ENCODE measurements at regions of chr15 and their contacts with region 1.

Region 1: GRCh38 chr15:31488426-31489204 is 162.0 kb downstream of the KLF13 start:
- DNase-seq: peak; percentile 85
- ATAC-seq: peak; percentile 69
- H3K4me3 ChIP-seq: no peak overlapping the region
- H3K4me3 Mint-ChIP-seq: no peak overlapping the region
- H3K27ac ChIP-seq: no peak overlapping the region
- H3K27ac Mint-ChIP-seq: peak overlapping the region; percentile 15
- H3K4me1 ChIP-seq: peaks cover 11 to 25% of the 10 kb centered on the region in 2 donors
- H3K4me1 Mint-ChIP-seq: peaks cover 23% of the 10 kb centered on the region
- H3K27me3 ChIP-seq: peaks cover 0 to 14% (median 5%) of the 10 kb centered on the region in 4 experiments
- H3K27me3 Mint-ChIP-seq: peaks cover 9% of the 10 kb centered on the region
- CTCF ChIP-seq: peak; percentile 86

Region 2: GRCh38 chr15:31128919-31129768 is 359.5 kb before region 1 on chr15:
- CTCF ChIA-PET with region 1: interaction called, 23 read pairs
- POLR2A ChIA-PET with region 1: no interaction called
- intact Hi-C with region 1: no loop called
- DNase-seq: peak; percentile 85
- ATAC-seq: peak; percentile 89
- H3K4me3 ChIP-seq: peak overlapping the region in 1 of 5 experiments; percentile 15
- H3K4me3 Mint-ChIP-seq: peak overlapping the region; percentile 0
- H3K27ac ChIP-seq: no peak overlapping the region
- H3K27ac Mint-ChIP-seq: peak overlapping the region; percentile 4
- H3K4me1 ChIP-seq: peaks cover 11 to 13% of the 10 kb centered on the region in 2 donors
- H3K4me1 Mint-ChIP-seq: peaks cover 13% of the 10 kb centered on the region
- H3K27me3 ChIP-seq: no peaks in the 10 kb centered on the region
- H3K27me3 Mint-ChIP-seq: no peaks in the 10 kb centered on the region
- CTCF ChIP-seq: peak; percentile 94

Region 3: GRCh38 chr15:31215490-31216214 is 273.0 kb before region 1 on chr15:
- CTCF ChIA-PET with region 1: interaction called, 124 read pairs
- POLR2A ChIA-PET with region 1: interaction called, 14 read pairs
- intact Hi-C with region 1: loop called (anchors 1 kb)
- DNase-seq: peak; percentile 90
- ATAC-seq: peak; percentile 82
- H3K4me3 ChIP-seq: peak overlapping the region in 4 of 5 experiments; percentile 35 to 72 (median 66)
- H3K4me3 Mint-ChIP-seq: peak overlapping the region; percentile 87
- H3K27ac ChIP-seq: peak overlapping the region; percentile 66 to 79
- H3K27ac Mint-ChIP-seq: peak overlapping the region; percentile 87
- H3K4me1 ChIP-seq: peaks cover 14 to 25% of the 10 kb centered on the region in 2 donors
- H3K4me1 Mint-ChIP-seq: peaks cover 23% of the 10 kb centered on the region
- H3K27me3 ChIP-seq: no peaks in the 10 kb centered on the region
- H3K27me3 Mint-ChIP-seq: no peaks in the 10 kb centered on the region
- CTCF ChIP-seq: peak; percentile 96

Region 4: GRCh38 chr15:31326156-31326732 is 162.4 kb before region 1 on chr15:
- CTCF ChIA-PET with region 1: interaction called, 47 read pairs
- POLR2A ChIA-PET with region 1: interaction called, 9 read pairs
- intact Hi-C with region 1: loop called (anchors 1 kb)
- DNase-seq: peak; percentile 100
- ATAC-seq: peak; percentile 70
- H3K4me3 ChIP-seq: peak overlapping the region; percentile 11 to 89 (median 80)
- H3K4me3 Mint-ChIP-seq: peak overlapping the region; percentile 95
- H3K27ac ChIP-seq: peak overlapping the region; percentile 79 to 97
- H3K27ac Mint-ChIP-seq: peak overlapping the region; percentile 99
- H3K4me1 ChIP-seq: peaks cover 49 to 59% of the 10 kb centered on the region in 2 donors
- H3K4me1 Mint-ChIP-seq: peaks cover 62% of the 10 kb centered on the region
- H3K27me3 ChIP-seq: no peaks in the 10 kb centered on the region
- H3K27me3 Mint-ChIP-seq: no peaks in the 10 kb centered on the region
- CTCF ChIP-seq: no peak

Region 5: DNA sequence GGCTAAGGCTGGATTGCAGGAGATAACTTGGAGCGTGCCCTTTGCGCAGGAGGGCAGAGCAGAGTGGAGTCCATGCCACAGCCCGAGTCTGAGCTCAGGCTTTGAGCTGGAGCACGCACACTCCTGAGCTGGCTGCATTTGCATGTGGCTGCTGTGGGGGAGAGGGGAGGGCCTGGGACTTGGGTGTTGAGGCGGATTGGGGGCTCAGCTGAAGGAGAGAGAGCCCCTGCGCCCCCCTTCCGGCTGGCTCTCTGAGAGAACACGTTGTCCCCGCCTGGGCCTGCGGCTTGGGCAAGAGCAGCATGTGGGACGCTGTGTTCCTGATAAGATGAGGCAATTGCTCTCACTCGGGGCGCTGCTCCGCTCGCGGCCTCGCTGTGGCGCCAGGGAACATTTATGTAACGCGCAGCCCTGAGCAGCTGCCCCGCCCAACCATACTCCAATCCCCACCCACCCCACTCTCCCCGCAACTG is 122.9 kb before region 1 on chr15:
- CTCF ChIA-PET with region 1: interaction called, 94 read pairs
- POLR2A ChIA-PET with region 1: interaction called, 3 read pairs
- intact Hi-C with region 1: loop called (anchors 1 kb)
- DNase-seq: peak; percentile 79
- ATAC-seq: peak; percentile 31
- H3K4me3 ChIP-seq: peak overlapping the region in 4 of 5 experiments; percentile 5 to 33 (median 15)
- H3K4me3 Mint-ChIP-seq: peak overlapping the region; percentile 80
- H3K27ac ChIP-seq: no peak overlapping the region
- H3K27ac Mint-ChIP-seq: peak overlapping the region; percentile 93
- H3K4me1 ChIP-seq: peaks cover 85 to 87% of the 10 kb centered on the region in 2 donors
- H3K4me1 Mint-ChIP-seq: peaks cover 95% of the 10 kb centered on the region
- H3K27me3 ChIP-seq: no peaks in the 10 kb centered on the region
- H3K27me3 Mint-ChIP-seq: no peaks in the 10 kb centered on the region
- CTCF ChIP-seq: peak; percentile 59

Region 6: DNA sequence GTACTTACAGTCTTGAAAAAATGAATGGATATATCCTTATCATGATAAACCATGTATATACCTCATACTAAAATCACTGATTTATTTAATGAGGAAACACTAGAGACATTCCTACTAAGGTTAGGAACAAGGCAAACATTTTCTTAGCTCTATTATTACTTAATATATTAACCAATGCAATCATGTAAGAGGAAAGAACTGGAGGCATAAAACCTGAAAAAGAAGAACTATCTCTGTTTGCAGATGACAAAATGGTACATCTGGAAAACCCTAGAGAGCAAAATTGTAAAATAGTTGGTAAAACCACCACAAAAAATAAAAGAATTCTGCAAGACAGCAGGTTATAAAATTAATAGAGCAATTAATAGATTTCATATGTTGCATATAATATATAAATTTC is 80.8 kb before region 1 on chr15:
- CTCF ChIA-PET with region 1: interaction called, 10 read pairs
- POLR2A ChIA-PET with region 1: no interaction called
- intact Hi-C with region 1: no loop called
- DNase-seq: no peak
- ATAC-seq: no peak
- H3K4me3 ChIP-seq: no peak overlapping the region
- H3K4me3 Mint-ChIP-seq: no peak overlapping the region
- H3K27ac ChIP-seq: no peak overlapping the region
- H3K27ac Mint-ChIP-seq: no peak overlapping the region
- H3K4me1 ChIP-seq: peaks cover 20 to 21% of the 10 kb centered on the region in 2 donors
- H3K4me1 Mint-ChIP-seq: peaks cover 19% of the 10 kb centered on the region
- H3K27me3 ChIP-seq: no peaks in the 10 kb centered on the region
- H3K27me3 Mint-ChIP-seq: peaks cover 5% of the 10 kb centered on the region
- CTCF ChIP-seq: no peak

Region 7: GRCh38 chr15:31458591-31459399 is 29.8 kb before region 1 on chr15:
- CTCF ChIA-PET with region 1: interaction called, 30 read pairs
- POLR2A ChIA-PET with region 1: interaction called, 4 read pairs
- intact Hi-C with region 1: no loop called
- DNase-seq: peak; percentile 80
- ATAC-seq: peak; percentile 96
- H3K4me3 ChIP-seq: peak overlapping the region in 3 of 5 experiments; percentile 12 to 37 (median 34)
- H3K4me3 Mint-ChIP-seq: peak overlapping the region; percentile 85
- H3K27ac ChIP-seq: peak overlapping the region; percentile 34 to 47
- H3K27ac Mint-ChIP-seq: peak overlapping the region; percentile 87
- H3K4me1 ChIP-seq: peaks cover 40 to 48% of the 10 kb centered on the region in 2 donors
- H3K4me1 Mint-ChIP-seq: peaks cover 44% of the 10 kb centered on the region
- H3K27me3 ChIP-seq: peaks cover 0 to 3% (median 0%) of the 10 kb centered on the region in 4 experiments
- H3K27me3 Mint-ChIP-seq: peaks cover 4% of the 10 kb centered on the region
- CTCF ChIP-seq: no peak